ENCODE measurements at regions of chr11 and their contacts with region 1.

Region 1: GRCh38 chr11:803770-804598 is 1.0 kb downstream of the PIDD1 start:
- DNase-seq: no peak
- H3K4me3 ChIP-seq: peak overlapping the region; percentile 28 to 71 (median 47); a peak in 7 of 8 replicates
- H3K27ac ChIP-seq: no peak overlapping the region
- H3K4me1 ChIP-seq: peaks cover 0 to 8% (median 7%) of the 10 kb centered on the region in 4 experiments; a peak in 5 of 7 replicates
- H3K27me3 ChIP-seq: no peaks in the 10 kb centered on the region; a peak in 1 of 7 replicates
- CTCF ChIP-seq: no peak
- EP300 ChIP-seq: no peak
- POLR2A ChIP-seq: no peak
- RAD21 ChIP-seq: no peak

Region 2: DNA sequence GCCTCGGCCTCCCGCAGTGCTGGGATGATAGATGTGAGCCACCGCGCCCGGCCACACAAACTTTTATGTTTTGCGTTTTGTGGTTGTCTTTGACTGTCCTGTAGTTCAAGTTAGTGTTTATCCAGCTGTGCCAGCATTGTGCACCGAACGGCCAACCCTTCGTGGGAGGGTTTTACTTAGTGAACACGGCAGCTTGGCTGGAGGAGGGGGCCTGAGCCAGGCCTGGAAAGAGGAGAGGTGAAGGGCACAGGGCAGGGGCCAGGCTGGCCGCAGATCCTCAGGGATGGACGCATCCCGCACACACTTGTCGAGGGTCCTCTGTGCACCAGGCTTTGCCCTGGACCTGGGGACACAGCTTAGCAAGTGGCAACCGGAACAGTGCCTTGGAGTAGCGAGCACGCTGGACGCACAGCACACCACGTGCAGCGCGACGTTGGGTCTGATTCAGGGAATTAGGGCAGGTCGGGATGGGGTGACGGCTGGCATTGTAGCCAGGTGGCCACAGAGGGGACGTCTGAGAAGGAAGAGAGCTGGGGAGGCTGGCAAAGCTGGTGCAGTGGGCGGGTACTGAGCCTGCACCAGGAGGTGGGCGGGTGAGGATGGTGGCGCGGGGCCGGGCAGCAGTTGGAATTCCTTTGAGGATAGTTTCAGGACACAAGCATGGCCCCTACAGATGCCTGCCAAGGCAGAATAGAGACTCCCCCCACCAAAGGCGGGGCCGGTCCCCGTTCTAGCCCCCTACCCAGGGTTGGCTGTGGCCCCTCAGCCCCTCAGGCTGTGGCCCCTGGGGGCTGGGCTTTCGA is 84.6 kb before region 1 on chr11:
- CTCF ChIA-PET with region 1: no interaction called
- POLR2A ChIA-PET with region 1: no interaction called
- DNase-seq: no peak
- H3K4me3 ChIP-seq: no peak overlapping the region
- H3K27ac ChIP-seq: no peak overlapping the region
- H3K4me1 ChIP-seq: peaks cover 0 to 7% (median 5%) of the 10 kb centered on the region in 4 experiments; a peak in 5 of 7 replicates
- H3K27me3 ChIP-seq: peaks cover 0 to 8% (median 8%) of the 10 kb centered on the region in 4 experiments; a peak in 4 of 7 replicates
- CTCF ChIP-seq: no peak
- EP300 ChIP-seq: no peak
- POLR2A ChIP-seq: no peak
- RAD21 ChIP-seq: no peak

Region 3: DNA sequence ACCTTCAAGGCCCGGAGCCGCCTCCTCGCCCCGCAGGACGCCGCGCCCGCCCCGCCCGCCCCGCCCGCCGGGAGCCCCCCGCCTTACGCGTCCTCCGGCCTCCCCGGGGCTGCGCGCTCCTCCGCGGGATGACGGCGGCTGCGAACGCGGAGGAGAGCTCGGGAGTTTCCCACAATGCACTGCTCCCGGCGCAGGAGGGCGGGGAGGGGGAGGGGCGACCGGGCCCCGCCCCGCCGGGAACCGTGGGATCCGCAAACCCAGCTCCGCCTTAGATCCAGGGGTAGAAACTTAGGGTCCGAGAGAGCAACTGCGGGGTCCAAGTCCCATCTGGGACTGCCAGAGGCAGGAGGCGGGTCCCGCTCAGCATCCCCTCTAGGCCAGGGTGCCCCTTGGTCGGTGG is 14.0 kb before region 1 on chr11 and contains the start of gene CEND1:
- CTCF ChIA-PET with region 1: interaction called, 3 read pairs
- POLR2A ChIA-PET with region 1: interaction called, 34 read pairs
- DNase-seq: peak in 1 of 2 experiments; percentile 79
- H3K4me3 ChIP-seq: peak within 1 kb of the TSS in 2 of 4 experiments; percentile 11 to 44; a peak in 3 of 8 replicates
- H3K27ac ChIP-seq: no peak within 1 kb of the TSS
- H3K4me1 ChIP-seq: peaks cover 0 to 18% (median 11%) of the 10 kb centered on the region in 4 experiments; a peak in 6 of 7 replicates
- H3K27me3 ChIP-seq: no peaks in the 10 kb centered on the region
- CTCF ChIP-seq: no peak
- EP300 ChIP-seq: no peak
- POLR2A ChIP-seq: no peak
- RAD21 ChIP-seq: no peak
- total RNA-seq, gene CEND1: 5.0 and 5.7 TPM in 2 replicates

Measured in H1 (cell line).